RWPE1 (cell line): ENCODE measurements at regions of chr11 and their contacts with region 1.

Region 1: DNA sequence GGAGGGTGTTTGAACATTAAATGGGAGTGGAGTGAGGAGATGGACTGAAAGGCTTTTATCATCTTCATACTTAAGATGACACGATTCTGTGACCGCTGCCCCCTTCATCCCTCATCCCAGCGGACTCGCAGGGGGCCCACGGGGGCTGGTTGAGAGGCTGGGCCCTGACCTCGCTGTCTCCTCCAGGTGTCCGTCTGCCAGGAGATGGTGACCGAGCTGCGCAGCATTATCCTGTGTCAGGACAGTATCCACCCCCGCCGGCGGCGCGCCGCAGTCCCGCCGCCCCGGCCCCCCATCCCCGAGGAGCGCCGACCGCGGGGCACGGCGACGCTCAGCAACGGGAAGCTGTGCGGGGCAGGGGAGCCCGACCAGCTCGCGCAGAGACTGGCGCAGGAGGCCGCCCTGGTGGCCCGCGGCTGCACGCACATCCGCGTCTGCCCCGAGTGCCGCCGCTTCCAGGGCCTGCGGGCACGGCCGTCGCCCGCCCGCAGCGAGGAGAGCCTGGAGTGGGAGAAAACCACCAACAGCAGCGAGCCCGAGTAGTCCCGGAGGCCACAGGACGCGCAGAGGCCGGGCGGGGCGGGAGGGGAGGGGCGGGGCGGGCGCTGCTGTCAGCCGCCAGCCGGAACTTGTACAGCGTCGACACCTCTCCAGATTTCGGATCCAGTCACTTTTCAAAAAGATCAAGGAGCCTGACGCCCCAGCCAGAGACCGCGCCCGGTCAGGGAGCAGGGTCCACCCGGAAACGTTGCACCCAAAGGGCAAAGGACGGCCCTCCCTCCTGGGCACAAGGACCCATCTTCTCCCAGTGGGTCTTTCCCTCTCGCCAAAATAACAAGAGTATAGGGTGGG is 38.0 kb upstream of the TBCEL start:
- DNase-seq: peak; percentile 46
- H3K27ac ChIP-seq: no peak overlapping the region
- CTCF ChIP-seq: peak; percentile 36

Region 2: GRCh38 chr11:120996973-120997372 is 11.0 kb after region 1 on chr11:
- CTCF ChIA-PET with region 1: no interaction called
- POLR2A ChIA-PET with region 1: no interaction called
- DNase-seq: no peak
- H3K27ac ChIP-seq: no peak overlapping the region
- CTCF ChIP-seq: no peak

Region 3: DNA sequence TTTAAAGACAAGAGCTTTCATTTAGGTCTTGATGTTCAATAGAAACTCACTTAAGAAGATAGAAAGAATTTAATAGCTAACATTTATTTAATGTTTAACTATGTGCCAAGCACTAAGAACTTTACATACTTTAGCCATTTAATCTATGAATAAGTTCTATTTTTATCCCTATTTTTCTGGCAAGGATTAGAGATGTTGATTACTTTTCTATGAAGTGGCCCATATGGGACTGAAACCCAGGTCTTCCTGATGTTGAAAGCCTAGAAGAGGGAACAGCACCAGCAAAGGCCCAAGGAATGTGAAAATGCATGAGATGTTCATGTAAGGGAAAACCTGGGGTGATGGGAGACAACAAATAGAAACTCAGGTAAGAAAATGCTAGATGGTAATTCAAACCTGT is 22.6 kb after region 1 on chr11:
- CTCF ChIA-PET with region 1: interaction called, 3 read pairs
- POLR2A ChIA-PET with region 1: interaction called, 10 read pairs
- DNase-seq: no peak
- H3K27ac ChIP-seq: no peak overlapping the region
- CTCF ChIP-seq: no peak

Region 4: DNA sequence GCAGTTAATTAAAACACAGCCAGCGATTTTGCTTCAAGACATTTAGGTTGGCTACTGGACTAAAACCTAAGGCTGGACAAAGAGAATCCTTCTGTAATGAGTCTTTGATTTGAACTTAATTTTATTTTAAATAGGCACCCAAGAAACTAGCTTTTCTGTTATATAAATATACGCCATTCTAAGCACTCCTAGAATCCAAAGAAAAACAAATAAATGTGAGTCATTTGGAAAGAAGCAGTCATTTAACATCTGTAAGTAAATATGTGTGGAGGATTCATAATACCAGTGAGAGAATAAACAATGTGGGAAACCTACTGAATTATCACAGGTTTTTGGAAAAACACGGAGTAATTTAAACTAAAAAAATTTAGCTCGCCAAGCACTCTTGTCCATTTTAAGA is 113.9 kb after region 1 on chr11:
- CTCF ChIA-PET with region 1: no interaction called
- POLR2A ChIA-PET with region 1: no interaction called
- DNase-seq: no peak
- H3K27ac ChIP-seq: no peak overlapping the region
- CTCF ChIP-seq: no peak

Region 5: GRCh38 chr11:121112498-121113455 is 126.8 kb after region 1 on chr11:
- CTCF ChIA-PET with region 1: no interaction called
- POLR2A ChIA-PET with region 1: no interaction called
- DNase-seq: peak; percentile 68
- H3K27ac ChIP-seq: no peak overlapping the region
- CTCF ChIP-seq: peak; percentile 54; the same call in 1 of the 2 replicates